ENCODE measurements at regions of chr21 and their contacts with region 1.

Region 1: DNA sequence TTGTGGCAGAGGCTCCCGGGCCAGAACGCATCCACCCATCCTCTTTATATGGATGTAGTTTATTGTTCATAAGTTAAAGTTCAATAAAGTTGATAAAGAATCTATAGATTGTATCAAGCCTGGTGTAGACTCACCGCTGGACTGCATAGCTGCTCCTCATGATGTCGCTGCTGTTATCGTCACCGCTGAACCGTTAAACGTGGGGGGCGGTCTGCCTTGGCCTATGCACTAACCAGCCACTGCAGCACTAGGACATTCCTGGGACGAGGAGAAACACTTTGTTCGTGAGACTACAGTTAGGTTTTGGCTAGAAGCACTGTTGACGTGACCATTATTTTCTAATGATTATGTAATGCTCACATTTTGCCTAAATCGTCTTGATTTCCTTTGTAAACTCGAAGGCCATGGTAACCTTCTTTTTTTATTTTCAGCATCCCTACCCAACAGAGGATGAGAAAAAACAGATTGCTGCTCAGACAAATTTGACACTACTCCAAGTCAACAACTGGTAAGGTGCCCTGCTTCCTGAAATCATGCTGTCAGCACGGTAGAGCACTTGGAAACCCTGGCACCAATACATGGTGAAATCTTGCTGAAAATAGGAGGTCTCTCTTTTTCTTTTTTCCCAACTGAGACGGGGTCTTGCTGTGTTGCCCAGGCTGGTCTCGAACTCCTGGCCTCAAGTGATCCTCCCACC is 50.2 kb downstream of the PKNOX1 start:
- DNase-seq: no peak
- ATAC-seq: no peak
- H3K4me3 ChIP-seq: no peak overlapping the region
- H3K4me3 Mint-ChIP-seq: no peak overlapping the region
- H3K27ac ChIP-seq: no peak overlapping the region
- H3K27ac Mint-ChIP-seq: no peak overlapping the region
- H3K4me1 ChIP-seq: no peaks in the 10 kb centered on the region
- H3K4me1 Mint-ChIP-seq: no peaks in the 10 kb centered on the region
- H3K27me3 ChIP-seq: no peaks in the 10 kb centered on the region
- H3K27me3 Mint-ChIP-seq: no peaks in the 10 kb centered on the region
- CTCF ChIP-seq: no peak

Region 2: DNA sequence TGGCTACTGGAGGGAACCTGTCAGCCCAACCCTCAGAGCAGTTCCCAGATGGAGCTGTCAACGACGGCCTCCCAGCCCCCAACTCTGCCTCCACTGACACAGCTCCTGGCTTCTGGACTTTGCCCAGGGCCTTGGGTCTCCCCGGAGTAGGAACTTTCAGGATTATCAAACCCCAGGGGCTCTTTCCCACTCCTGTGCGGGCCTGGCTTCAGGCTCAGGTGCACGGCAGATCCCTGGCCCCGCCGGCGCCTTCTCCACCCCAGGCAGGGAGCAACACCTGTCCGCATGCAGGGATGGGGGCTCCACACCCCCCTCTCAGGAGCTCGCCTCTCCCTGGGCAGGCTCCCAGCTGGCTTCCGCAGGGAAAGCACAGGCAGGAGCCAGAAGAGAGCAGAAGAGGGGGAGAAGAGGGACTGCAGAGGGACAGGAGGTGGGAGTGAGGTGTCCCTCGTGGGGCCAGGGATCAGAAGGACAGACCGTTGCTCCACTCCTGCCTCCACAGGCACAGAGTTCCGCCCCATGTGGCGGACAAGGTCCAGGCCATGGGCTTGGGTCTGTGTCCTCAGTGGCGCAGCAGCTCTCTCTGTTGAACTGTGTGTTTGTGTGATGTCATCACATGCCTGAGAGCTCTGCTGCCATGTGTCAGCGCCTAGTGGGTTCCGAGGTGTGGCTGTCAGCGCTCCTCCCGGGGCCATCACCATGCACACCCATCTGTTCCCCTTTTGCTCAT is 263.5 kb before region 1 on chr21:
- CTCF ChIA-PET with region 1: no interaction called
- POLR2A ChIA-PET with region 1: no interaction called
- intact Hi-C with region 1: no loop called
- DNase-seq: no peak
- ATAC-seq: no peak
- H3K4me3 ChIP-seq: no peak overlapping the region
- H3K4me3 Mint-ChIP-seq: no peak overlapping the region
- H3K27ac ChIP-seq: no peak overlapping the region
- H3K27ac Mint-ChIP-seq: no peak overlapping the region
- H3K4me1 ChIP-seq: no peaks in the 10 kb centered on the region
- H3K4me1 Mint-ChIP-seq: no peaks in the 10 kb centered on the region
- H3K27me3 ChIP-seq: peaks cover 0 to 3% of the 10 kb centered on the region in 2 experiments
- H3K27me3 Mint-ChIP-seq: no peaks in the 10 kb centered on the region
- CTCF ChIP-seq: no peak

Region 3: DNA sequence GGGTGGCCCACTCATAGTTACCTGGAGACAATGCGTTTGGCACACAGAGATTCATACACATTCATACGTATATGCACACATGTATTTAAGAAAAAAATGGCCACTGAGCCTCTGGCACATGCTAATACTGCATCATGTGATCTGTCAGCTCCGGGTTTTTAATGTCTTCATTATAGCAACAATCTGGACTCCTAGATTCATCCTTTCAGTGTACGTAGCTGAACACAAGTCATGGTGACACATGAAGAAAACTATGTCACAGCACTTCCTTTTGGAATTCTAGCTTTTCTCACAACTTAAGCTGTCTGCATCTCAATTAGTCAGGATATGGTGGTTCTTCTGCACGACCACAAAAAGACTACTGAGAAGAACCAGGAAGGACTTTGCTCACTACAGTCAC is 610.0 kb after region 1 on chr21:
- CTCF ChIA-PET with region 1: no interaction called
- POLR2A ChIA-PET with region 1: no interaction called
- intact Hi-C with region 1: loop called in 1 of 2 experiments (anchors 5 kb)
- DNase-seq: no peak
- ATAC-seq: no peak
- H3K4me3 ChIP-seq: no peak overlapping the region
- H3K4me3 Mint-ChIP-seq: no peak overlapping the region
- H3K27ac ChIP-seq: no peak overlapping the region
- H3K27ac Mint-ChIP-seq: no peak overlapping the region
- H3K4me1 ChIP-seq: no peaks in the 10 kb centered on the region
- H3K4me1 Mint-ChIP-seq: no peaks in the 10 kb centered on the region
- H3K27me3 ChIP-seq: peaks cover 0 to 4% of the 10 kb centered on the region in 2 experiments
- H3K27me3 Mint-ChIP-seq: no peaks in the 10 kb centered on the region
- CTCF ChIP-seq: no peak

Region 4: DNA sequence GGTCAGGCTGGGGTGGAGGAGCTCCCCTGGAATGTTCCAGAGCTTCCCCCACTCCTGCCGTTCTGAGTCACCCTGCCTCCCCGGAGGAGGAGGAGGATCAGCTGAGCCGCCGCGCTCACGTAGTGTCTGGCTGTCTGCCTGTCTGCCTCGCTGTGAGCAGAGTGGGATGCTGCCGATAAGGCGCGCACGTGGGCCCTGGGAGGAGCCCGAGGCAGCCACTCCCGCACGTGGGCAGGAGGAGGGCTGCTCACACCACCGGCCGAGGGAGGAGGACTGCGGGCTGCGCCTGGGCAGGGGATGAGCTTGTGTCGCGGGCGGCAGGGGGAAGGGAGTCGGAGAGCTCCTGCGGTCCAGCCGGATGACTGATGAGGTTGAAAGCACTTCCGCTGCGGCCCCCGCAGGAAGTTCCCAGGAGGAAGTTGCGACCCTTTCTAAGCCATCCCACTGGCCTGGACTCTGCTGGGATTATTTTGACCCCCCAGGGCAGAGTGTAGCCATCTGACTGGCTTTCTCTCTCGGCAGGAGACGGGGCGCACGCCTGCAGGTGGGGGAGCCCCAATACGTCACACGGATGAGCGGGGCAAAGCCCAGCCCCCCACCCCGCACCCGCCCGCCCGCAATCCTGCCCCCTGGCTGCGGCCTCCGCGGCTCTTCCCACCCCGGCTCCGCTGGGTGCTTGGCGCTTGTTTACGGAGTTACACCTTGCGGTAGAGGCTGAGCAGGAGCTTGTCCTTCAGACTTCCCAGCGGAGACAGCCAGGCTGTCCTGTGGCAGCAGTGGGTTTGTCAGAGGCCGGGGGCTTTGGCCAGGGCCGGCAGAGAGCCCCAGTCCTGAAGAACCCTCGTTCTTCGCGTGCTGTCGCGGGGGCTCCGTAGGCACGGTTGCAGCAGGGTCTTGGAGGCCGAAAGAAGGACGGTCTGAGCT is 704.1 kb after region 1 on chr21:
- CTCF ChIA-PET with region 1: no interaction called
- POLR2A ChIA-PET with region 1: no interaction called
- intact Hi-C with region 1: no loop called
- DNase-seq: peak; percentile 57 to 94 (median 76)
- ATAC-seq: peak; percentile 88
- H3K4me3 ChIP-seq: peak overlapping the region; percentile 44 to 58
- H3K4me3 Mint-ChIP-seq: peak overlapping the region; percentile 87
- H3K27ac ChIP-seq: peak overlapping the region in 1 of 2 experiments; percentile 81
- H3K27ac Mint-ChIP-seq: peak overlapping the region; percentile 87
- H3K4me1 ChIP-seq: peaks cover 31% of the 10 kb centered on the region
- H3K4me1 Mint-ChIP-seq: peaks cover 42% of the 10 kb centered on the region
- H3K27me3 ChIP-seq: no peaks in the 10 kb centered on the region
- H3K27me3 Mint-ChIP-seq: no peaks in the 10 kb centered on the region
- CTCF ChIP-seq: peak; percentile 22

Region 5: DNA sequence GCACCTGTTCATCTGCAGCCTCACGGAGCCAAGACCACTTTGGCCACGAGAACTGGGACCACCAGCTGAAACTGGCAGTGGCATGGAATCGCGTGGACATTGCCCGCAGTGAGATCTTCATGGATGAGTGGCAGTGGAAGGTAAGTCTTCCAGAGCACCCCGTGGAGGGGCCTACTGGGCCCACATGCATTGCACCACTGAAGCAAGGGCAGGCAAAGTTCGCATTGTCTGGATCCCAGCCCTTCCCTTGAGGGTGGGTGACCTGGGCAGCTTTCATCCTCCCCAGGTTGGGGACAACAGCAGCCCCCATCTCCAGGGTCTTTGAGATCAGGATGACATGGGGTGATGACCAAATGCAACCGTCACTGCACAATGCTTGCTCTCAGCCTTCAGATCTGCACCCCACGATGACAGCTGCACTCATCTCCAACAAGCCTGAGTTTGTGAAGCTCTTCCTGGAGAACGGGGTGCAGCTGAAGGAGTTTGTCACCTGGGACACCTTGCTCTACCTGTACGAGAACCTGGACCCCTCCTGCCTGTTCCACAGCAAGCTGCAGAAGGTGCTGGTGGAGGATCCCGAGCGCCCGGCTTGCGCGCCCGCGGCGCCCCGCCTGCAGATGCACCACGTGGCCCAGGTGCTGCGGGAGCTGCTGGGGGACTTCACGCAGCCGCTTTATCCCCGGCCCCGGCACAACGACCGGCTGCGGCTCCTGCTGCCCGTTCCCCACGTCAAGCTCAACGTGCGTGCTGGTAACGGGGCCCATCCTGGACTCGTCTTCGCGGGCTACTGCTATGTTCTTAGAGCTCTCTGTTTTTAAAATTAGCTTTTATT is 1366.5 kb after region 1 on chr21:
- CTCF ChIA-PET with region 1: no interaction called
- POLR2A ChIA-PET with region 1: no interaction called
- intact Hi-C with region 1: no loop called
- DNase-seq: peak in 2 of 9 experiments; percentile 2 to 35
- ATAC-seq: no peak
- H3K4me3 ChIP-seq: no peak overlapping the region
- H3K4me3 Mint-ChIP-seq: no peak overlapping the region
- H3K27ac ChIP-seq: no peak overlapping the region
- H3K27ac Mint-ChIP-seq: no peak overlapping the region
- H3K4me1 ChIP-seq: no peaks in the 10 kb centered on the region
- H3K4me1 Mint-ChIP-seq: no peaks in the 10 kb centered on the region
- H3K27me3 ChIP-seq: no peaks in the 10 kb centered on the region
- H3K27me3 Mint-ChIP-seq: no peaks in the 10 kb centered on the region
- CTCF ChIP-seq: no peak